Calu3 (cell line): ENCODE measurements at regions of chr6 and their contacts with region 1.

Region 1: DNA sequence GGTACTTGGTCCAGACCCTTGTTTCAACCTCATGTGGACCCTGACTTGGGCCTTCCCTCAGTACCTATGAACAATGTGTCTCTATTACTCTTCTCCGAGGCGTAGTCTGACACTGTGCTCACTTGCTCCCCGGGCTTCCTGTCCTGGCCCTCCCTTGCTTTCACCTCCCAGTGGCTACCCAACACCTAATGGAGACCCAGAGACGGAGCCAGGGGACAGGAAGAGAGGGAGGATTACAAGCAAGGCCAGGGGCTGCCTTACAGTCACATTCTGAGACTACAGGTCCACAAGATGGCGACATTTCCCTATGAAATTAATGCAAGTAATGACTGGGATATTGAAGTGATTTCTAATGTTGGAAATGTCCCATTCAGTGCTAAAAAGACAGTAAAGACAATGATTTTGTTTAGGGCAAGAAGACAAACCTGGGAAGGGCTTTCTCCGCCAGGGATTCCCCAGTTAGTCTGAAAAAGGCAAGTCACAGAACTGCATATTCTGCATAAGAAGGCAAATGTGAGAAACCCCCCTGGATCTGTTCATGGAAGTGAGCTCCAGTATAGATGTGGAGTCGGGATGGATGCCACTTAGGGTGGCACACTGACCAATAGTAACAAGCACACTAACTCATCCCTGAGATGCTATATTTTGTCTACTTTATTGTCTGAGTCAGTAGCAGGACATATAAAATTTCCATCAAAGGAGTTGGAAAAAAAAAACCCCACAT is 44.0 kb upstream of the ZBTB24 start:
- DNase-seq: peak; percentile 66
- H3K4me3 Mint-ChIP-seq: no peak overlapping the region
- H3K27ac Mint-ChIP-seq: no peak overlapping the region
- H3K4me1 Mint-ChIP-seq: peaks cover 7% of the 10 kb centered on the region
- H3K27me3 Mint-ChIP-seq: no peaks in the 10 kb centered on the region
- CTCF ChIP-seq: peak; percentile 55

Region 2: DNA sequence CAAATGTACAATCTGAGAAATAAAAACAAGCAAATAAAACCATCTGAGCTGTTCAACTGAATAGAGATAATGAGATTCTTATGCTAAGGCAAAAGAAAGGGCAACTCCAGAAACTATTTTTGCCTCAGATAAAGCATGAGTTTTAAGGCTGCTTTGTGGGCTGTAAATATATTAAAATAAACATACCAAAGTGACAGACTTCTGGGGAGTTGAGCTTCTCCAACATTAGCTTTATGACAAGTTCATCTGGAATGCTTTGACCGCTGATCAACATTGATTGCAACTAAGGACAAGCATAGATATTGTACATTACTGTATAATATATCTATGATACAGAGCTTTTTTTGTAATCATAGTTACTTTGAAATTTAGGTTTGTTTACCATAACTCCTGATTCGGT is 144.7 kb after region 1 on chr6:
- CTCF ChIA-PET with region 1: no interaction called
- intact Hi-C with region 1: no loop called
- DNase-seq: no peak
- H3K4me3 Mint-ChIP-seq: no peak overlapping the region
- H3K27ac Mint-ChIP-seq: no peak overlapping the region
- H3K4me1 Mint-ChIP-seq: no peaks in the 10 kb centered on the region
- H3K27me3 Mint-ChIP-seq: no peaks in the 10 kb centered on the region
- CTCF ChIP-seq: no peak

Region 3: DNA sequence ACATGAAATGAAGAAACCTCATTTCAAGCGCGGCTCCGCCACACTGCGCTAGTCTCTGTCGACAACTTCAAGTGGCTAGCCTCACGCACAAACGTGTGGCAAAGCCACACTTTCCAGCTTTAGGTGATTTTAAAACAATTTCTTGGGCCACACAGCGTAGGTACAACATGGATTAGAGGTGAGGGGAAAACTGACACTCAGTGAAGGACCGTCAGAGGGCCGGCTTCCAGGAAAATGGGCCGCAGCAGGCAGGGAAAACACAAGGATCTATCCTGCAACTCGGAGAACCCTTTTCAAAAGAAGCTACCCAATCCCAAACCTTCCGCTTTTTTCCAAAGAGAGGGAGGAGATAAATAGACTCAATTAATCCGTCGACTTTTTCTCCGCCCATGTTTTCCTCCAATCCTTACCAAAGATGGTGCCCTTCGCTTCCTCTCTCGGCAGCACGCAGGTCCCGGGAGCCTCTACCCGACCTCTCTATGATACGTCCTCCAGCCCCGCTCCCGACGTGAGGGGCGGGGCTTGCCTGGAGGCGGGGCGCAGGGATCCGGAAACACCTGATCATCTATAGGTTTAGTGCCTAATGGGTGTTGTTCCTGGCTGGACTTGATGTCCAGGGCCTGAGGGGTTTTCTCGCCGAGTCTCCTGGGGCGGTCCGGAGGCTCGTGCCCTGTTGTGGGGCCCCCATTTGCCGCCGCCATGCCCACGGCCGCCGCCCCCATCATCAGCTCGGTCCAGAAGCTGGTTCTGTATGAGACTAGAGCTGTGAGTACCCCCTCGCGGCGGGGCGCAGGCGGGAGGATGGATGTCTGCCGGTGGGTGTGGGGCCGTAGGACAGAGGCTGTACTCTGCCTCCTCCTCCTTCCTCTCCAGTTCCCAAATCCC is 163.9 kb after region 1 on chr6 and contains the starts of genes AK9 and FIG4:
- CTCF ChIA-PET with region 1: interaction called, 3 read pairs
- intact Hi-C with region 1: loop called (anchors 2 kb)
- DNase-seq: peak; percentile 94
- H3K4me3 Mint-ChIP-seq: peak within 1 kb of the TSS; percentile 77
- H3K27ac Mint-ChIP-seq: peak within 1 kb of the TSS; percentile 73
- H3K4me1 Mint-ChIP-seq: peaks cover 18% of the 10 kb centered on the region
- H3K27me3 Mint-ChIP-seq: no peaks in the 10 kb centered on the region
- CTCF ChIP-seq: no peak
- total RNA-seq, gene AK9: 5.6 and 7.6 TPM in 2 replicates
- total RNA-seq, gene FIG4: 11.4 and 14.7 TPM in 2 replicates

Region 4: GRCh38 chr6:109892436-109893435 is 365.7 kb after region 1 on chr6:
- CTCF ChIA-PET with region 1: no interaction called
- intact Hi-C with region 1: loop called (anchors 5 kb)
- DNase-seq: peak; percentile 86
- H3K4me3 Mint-ChIP-seq: peak overlapping the region; percentile 46
- H3K27ac Mint-ChIP-seq: peak overlapping the region; percentile 97
- H3K4me1 Mint-ChIP-seq: peaks cover 44% of the 10 kb centered on the region
- H3K27me3 Mint-ChIP-seq: no peaks in the 10 kb centered on the region
- CTCF ChIP-seq: peak; percentile 20

Region 5: DNA sequence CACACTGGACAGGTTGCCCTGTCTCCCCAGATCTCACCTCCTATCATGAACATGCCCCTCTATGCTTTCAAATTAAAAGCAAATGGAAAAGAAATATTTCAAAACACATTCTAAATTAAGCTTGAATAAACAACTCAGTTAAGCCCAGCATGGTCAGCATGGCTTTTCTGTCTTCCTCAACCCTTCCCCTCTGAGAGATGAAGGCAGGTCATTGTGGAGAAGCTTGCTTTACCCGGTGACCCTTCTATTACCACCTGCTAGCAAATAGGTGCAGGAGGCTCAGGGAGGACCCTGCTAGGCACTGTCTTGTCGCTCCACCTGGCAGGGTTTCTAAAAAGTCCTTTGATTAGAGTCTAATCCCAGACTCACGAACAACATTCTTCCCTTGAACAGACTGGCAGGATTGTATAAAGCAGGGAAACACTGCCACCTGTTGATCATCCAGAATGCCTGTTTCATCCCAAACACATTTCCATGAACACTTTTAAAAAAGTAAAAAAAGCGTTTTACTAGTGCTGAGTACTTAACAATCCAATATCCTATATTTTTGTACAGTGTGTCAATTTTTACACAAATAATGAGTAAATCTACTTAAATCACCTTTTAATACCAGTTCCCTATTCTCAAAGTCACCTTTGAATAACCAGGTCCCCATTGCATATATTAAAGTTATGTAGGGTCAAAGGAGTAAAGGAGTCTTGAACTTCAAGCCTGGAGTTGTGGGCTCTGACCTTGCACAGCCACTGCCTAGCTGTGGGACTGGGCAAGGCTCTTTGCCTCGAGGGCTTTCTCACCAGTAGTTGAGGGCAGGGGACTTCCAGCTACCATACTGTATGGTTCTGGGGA is 526.6 kb after region 1 on chr6:
- CTCF ChIA-PET with region 1: no interaction called
- intact Hi-C with region 1: loop called (anchors 1 kb)
- DNase-seq: peak; percentile 44
- H3K4me3 Mint-ChIP-seq: no peak overlapping the region
- H3K27ac Mint-ChIP-seq: no peak overlapping the region
- H3K4me1 Mint-ChIP-seq: no peaks in the 10 kb centered on the region
- H3K27me3 Mint-ChIP-seq: peaks cover 17% of the 10 kb centered on the region
- CTCF ChIP-seq: no peak

Region 6: GRCh38 chr6:110389689-110390382 is 862.8 kb after region 1 on chr6:
- CTCF ChIA-PET with region 1: no interaction called
- intact Hi-C with region 1: loop called (anchors 2 kb)
- DNase-seq: no peak
- H3K4me3 Mint-ChIP-seq: no peak overlapping the region
- H3K27ac Mint-ChIP-seq: no peak overlapping the region
- H3K4me1 Mint-ChIP-seq: peaks cover 8% of the 10 kb centered on the region
- H3K27me3 Mint-ChIP-seq: no peaks in the 10 kb centered on the region
- CTCF ChIP-seq: no peak